ENCODE measurements at regions of chr3 and their contacts with region 1.

Region 1: GRCh38 chr3:141875374-141875892 is 1.0 kb upstream of the ATP1B3 start:
- DNase-seq: peak; percentile 84
- H3K4me3 ChIP-seq: peak overlapping the region; percentile 67 to 98 (median 88)
- H3K27ac ChIP-seq: peak overlapping the region; percentile 88
- H3K4me1 ChIP-seq: peaks cover 18% of the 10 kb centered on the region
- H3K27me3 ChIP-seq: no peaks in the 10 kb centered on the region
- CTCF ChIP-seq: peak; percentile 83 to 89
- POLR2A ChIP-seq: no peak

Region 2: DNA sequence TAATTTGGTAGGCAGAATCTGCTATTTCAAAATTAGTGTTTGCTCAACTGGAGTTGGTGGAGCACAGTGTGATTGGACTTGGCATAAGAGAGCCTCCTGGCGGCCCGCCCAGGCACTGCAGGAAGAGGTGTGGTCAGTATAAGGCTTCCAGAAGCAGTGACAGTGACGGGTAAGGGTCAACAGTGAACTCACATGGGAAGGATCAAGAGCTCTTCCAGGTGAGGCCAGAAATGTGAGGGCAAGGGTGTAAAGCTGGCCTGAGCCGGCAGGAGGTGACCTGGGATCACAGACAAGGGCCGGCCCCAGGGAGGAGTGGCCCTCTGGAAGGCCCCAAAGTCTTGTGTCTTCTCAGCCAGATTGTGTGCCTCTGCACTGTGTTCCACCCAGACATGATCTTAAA is 230.5 kb before region 1 on chr3:
- CTCF ChIA-PET with region 1: interaction called, 10 read pairs
- POLR2A ChIA-PET with region 1: no interaction called
- dilution Hi-C with region 1: no loop called
- intact Hi-C with region 1: loop called (anchors 1 kb)
- DNase-seq: peak; percentile 43
- H3K4me3 ChIP-seq: no peak overlapping the region
- H3K27ac ChIP-seq: no peak overlapping the region
- H3K4me1 ChIP-seq: no peaks in the 10 kb centered on the region
- H3K27me3 ChIP-seq: no peaks in the 10 kb centered on the region
- CTCF ChIP-seq: peak; percentile 76 to 88
- POLR2A ChIP-seq: no peak

Region 3: GRCh38 chr3:141782454-141782853 is 93.0 kb before region 1 on chr3:
- CTCF ChIA-PET with region 1: interaction called, 28 read pairs
- POLR2A ChIA-PET with region 1: no interaction called
- dilution Hi-C with region 1: no loop called
- intact Hi-C with region 1: loop called (anchors 1 kb)
- DNase-seq: peak; percentile 50
- H3K4me3 ChIP-seq: no peak overlapping the region
- H3K27ac ChIP-seq: no peak overlapping the region
- H3K4me1 ChIP-seq: no peaks in the 10 kb centered on the region
- H3K27me3 ChIP-seq: peaks cover 0 to 3% of the 10 kb centered on the region in 2 experiments
- CTCF ChIP-seq: peak in 1 of 2 donors; percentile 40
- POLR2A ChIP-seq: no peak

Region 4: DNA sequence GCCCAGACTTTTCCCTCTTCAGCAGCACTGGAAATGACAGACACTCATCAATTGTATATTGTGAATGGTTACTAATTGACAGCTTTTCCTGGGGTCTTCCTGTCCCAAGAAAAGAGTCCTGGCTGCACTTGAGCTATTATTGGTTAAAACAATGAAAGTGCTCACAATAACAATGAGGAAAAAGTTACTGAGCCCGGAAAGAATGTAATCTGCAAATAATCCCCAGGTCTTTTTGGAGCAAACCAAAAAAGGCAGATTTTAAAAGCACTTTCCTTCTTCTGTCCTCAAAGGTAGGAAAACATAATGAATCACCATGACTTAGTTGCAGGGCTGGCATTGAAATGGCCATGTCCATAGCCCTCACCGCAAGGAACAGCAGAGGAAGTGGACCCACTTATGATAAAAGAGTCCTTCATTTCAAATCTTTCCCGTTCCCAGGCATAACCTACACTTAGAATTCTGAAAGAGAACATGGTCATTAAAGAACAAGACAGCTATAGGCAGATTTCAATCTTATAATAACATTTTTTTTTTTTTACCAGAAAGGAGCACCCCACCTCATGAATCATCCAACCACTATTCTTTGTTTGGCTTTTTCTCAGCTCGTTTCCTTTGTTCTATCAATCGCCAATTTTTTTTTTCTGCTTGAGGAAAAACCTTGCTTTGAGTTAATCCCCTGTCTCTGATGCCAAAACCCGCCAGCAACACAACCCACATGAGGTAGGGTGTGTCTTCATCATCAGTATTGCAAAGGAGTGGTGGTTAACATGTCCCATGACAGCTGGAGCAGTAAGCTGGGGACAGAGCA is 34.5 kb before region 1 on chr3:
- CTCF ChIA-PET with region 1: interaction called, 10 read pairs
- POLR2A ChIA-PET with region 1: no interaction called
- dilution Hi-C with region 1: no loop called
- intact Hi-C with region 1: loop called (anchors 1 kb)
- DNase-seq: peak; percentile 84
- H3K4me3 ChIP-seq: peak overlapping the region in 1 of 3 experiments; percentile 9
- H3K27ac ChIP-seq: peak overlapping the region; percentile 80
- H3K4me1 ChIP-seq: peaks cover 21% of the 10 kb centered on the region
- H3K27me3 ChIP-seq: no peaks in the 10 kb centered on the region
- CTCF ChIP-seq: no peak
- POLR2A ChIP-seq: no peak

Region 5: DNA sequence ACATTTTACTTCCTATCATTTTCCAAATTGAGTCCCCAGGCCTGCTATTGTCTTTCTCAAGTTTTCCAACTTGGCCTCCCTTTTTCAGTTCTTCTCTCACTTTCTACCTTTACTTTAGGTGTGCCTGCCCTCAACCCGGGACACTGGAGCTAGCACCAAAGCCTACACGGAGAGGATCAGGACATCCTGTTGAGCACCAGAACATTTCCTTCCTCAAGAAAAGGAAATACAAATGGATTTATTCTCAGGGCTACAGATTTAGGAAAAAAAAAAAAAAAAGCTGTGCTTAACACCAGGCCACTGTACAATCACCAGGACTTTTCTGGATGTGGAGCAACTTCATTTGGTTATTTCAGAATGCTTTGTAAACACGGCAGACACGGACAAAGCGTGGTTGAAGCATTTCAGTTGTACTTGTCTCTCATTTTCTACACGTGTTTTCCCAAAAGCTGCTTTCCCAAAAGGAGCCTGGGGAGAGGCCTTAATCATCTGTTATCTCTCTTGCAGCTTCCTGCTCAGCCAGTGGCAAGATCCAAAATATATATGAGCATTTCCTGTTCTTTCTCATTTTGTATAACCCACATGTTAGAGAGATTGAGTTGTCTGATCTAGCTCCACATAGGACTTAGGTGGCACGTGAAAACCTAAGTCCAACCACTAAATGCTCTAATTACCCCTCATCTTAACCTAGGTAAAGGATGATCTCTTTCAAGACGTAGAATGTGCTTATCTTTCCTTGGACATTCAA is 14.5 kb before region 1 on chr3:
- CTCF ChIA-PET with region 1: interaction called, 11 read pairs
- POLR2A ChIA-PET with region 1: interaction called, 4 read pairs
- dilution Hi-C with region 1: no loop called
- intact Hi-C with region 1: loop called (anchors 2 kb)
- DNase-seq: peak; percentile 74
- H3K4me3 ChIP-seq: no peak overlapping the region
- H3K27ac ChIP-seq: peak overlapping the region; percentile 31
- H3K4me1 ChIP-seq: peaks cover 19% of the 10 kb centered on the region
- H3K27me3 ChIP-seq: no peaks in the 10 kb centered on the region
- CTCF ChIP-seq: no peak
- POLR2A ChIP-seq: no peak

Region 6: DNA sequence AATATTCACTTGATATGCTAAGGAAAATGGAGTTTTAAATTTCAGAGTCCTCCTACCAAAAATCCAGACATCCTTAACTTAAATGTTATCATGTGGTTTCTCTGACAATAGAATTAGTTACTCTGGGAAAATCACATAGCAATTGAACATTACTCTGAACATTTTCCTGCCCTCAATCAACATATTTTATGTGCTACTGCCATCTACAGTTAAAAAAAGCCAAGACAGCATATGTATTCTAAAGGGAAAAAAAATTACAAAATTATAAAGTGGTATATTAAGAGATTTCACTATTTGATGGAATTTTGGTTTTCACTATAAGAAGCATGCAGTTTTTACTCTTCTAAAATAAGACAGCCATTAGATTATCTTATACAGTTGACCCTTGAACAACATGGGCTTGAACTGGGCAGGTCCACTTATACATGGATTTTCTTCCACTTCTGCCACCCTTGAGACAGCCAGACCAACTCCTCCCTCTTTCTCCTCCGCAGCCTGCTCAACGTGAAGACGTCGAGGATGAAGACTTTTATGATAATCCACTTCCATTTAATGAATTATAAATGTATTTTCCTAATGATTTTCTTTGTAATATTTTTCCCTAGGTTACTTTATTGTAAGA is 123.3 kb after region 1 on chr3:
- CTCF ChIA-PET with region 1: no interaction called
- POLR2A ChIA-PET with region 1: no interaction called
- dilution Hi-C with region 1: no loop called
- intact Hi-C with region 1: loop called (anchors 2 kb)
- DNase-seq: peak; percentile 19
- H3K4me3 ChIP-seq: no peak overlapping the region
- H3K27ac ChIP-seq: no peak overlapping the region
- H3K4me1 ChIP-seq: no peaks in the 10 kb centered on the region
- H3K27me3 ChIP-seq: no peaks in the 10 kb centered on the region
- CTCF ChIP-seq: peak in 1 of 2 donors; percentile 8
- POLR2A ChIP-seq: no peak

Region 7: DNA sequence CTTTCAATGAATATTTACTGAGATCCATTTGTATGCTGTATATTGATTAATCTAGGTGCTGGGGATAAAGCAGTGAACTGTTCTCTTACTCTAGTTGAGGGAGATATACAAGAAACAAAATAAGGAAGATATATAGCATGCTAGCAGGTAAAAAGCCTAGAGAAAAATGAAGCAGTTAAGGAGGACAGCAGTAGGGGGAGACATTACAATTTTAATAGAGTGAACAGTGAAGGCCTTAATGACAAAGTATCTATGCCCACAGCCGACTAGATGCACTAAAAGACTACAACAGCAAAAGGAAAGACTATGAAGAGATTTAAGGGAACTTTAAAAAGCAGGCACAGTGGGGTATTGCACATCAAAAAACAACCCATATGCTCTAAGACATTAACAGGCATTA is 491.0 kb after region 1 on chr3:
- CTCF ChIA-PET with region 1: no interaction called
- POLR2A ChIA-PET with region 1: no interaction called
- dilution Hi-C with region 1: no loop called
- intact Hi-C with region 1: no loop called
- DNase-seq: peak; percentile 12
- H3K4me3 ChIP-seq: no peak overlapping the region
- H3K27ac ChIP-seq: no peak overlapping the region
- H3K4me1 ChIP-seq: no peaks in the 10 kb centered on the region
- H3K27me3 ChIP-seq: no peaks in the 10 kb centered on the region
- CTCF ChIP-seq: peak in 1 of 2 donors; percentile 1
- POLR2A ChIP-seq: no peak

Measured in endothelial cell of umbilical vein (primary cell).